ENCODE measurements at regions of chr5 and their contacts with region 1.

Region 1: DNA sequence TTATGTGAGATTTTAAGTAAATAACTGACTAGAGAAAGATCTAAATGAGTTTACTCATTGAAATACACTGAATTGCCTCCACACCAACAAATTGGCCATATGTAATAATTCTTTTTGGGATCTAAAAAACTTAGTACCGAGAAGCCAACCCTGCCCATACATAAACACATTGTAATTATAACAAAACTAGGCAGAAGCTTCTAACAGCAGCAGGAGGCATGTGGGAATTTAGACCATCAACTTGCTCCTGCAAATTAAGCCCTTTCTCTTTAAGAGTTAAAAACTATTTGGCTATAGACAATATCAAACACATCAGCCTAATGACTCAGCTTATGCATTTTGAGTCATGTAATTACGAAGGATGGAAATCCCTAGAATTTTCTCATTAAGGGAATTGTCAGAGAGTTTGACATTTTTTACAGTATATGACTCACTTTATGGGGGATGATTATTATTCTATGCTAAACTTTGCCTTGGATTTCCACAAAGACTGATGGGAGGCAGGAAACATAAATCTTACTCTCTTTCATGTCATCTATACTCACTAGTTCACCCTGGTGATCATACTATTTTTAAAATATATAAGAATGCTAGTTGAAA is 1.0 kb downstream of the IL7R start:
- DNase-seq: no peak
- ATAC-seq: no peak
- H3K4me3 ChIP-seq: peak overlapping the region; percentile 83 to 94
- H3K4me3 Mint-ChIP-seq: peak overlapping the region; percentile 92 to 97 (median 92)
- H3K27ac ChIP-seq: peak overlapping the region; percentile 99
- H3K27ac Mint-ChIP-seq: peak overlapping the region; percentile 99 to 100
- H3K4me1 ChIP-seq: peaks cover 36 to 49% of the 10 kb centered on the region in 2 experiments
- H3K4me1 Mint-ChIP-seq: peaks cover 52 to 76% (median 68%) of the 10 kb centered on the region in 3 donors
- H3K27me3 ChIP-seq: no peaks in the 10 kb centered on the region
- H3K27me3 Mint-ChIP-seq: no peaks in the 10 kb centered on the region

Region 2: GRCh38 chr5:35640623-35641022 is 217.1 kb before region 1 on chr5:
- CTCF ChIA-PET with region 1: no interaction called
- POLR2A ChIA-PET with region 1: no interaction called
- DNase-seq: no peak
- ATAC-seq: no peak
- H3K4me3 ChIP-seq: no peak overlapping the region
- H3K4me3 Mint-ChIP-seq: no peak overlapping the region
- H3K27ac ChIP-seq: no peak overlapping the region
- H3K27ac Mint-ChIP-seq: no peak overlapping the region
- H3K4me1 ChIP-seq: no peaks in the 10 kb centered on the region
- H3K4me1 Mint-ChIP-seq: no peaks in the 10 kb centered on the region
- H3K27me3 ChIP-seq: no peaks in the 10 kb centered on the region
- H3K27me3 Mint-ChIP-seq: no peaks in the 10 kb centered on the region

Region 3: DNA sequence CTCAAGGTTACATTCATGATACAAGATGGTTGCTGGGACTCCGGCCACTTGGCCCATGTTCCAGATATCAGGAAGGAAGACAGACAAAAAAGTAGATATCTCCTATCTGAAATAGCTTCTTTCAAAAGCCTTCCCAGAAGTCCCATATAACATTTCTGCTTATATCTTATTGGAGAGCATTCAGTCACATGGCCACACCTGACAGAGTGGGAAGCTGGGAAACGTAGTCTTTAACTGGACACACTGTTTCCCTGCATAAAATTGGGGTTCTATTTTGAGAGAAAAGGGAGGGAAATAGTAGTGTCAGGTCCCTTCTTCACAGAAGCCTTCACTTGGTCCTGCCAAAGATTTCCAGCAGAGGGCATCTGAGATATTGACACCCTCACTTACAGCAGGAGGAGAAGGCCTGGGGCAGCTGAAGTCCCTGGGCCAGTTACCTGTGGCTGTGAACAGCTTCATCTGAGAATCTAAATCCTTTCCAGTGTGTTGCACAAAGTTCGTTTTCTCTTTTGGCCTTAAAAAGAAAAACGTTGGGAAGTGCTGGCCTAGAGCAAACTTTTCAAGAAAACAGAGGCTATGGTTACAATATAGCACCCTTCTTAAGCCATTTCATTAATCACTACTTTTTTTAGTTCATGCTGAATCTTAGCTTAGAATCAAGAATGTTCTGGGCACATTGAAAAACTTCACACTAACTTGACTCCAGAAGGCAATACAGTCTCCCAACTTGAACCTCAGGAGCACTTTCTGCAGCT is 206.5 kb before region 1 on chr5:
- CTCF ChIA-PET with region 1: interaction called, 3 to 8 read pairs
- POLR2A ChIA-PET with region 1: interaction called in 1 of 2 experiments, 12 read pairs
- DNase-seq: peak; percentile 15 to 79 (median 58)
- ATAC-seq: peak; percentile 86 to 96 (median 94)
- H3K4me3 ChIP-seq: no peak overlapping the region
- H3K4me3 Mint-ChIP-seq: no peak overlapping the region
- H3K27ac ChIP-seq: no peak overlapping the region
- H3K27ac Mint-ChIP-seq: peak overlapping the region; percentile 45 to 66
- H3K4me1 ChIP-seq: peaks cover 0 to 4% of the 10 kb centered on the region in 2 experiments
- H3K4me1 Mint-ChIP-seq: peaks cover 6 to 9% (median 8%) of the 10 kb centered on the region in 3 donors
- H3K27me3 ChIP-seq: no peaks in the 10 kb centered on the region
- H3K27me3 Mint-ChIP-seq: no peaks in the 10 kb centered on the region

Region 4: DNA sequence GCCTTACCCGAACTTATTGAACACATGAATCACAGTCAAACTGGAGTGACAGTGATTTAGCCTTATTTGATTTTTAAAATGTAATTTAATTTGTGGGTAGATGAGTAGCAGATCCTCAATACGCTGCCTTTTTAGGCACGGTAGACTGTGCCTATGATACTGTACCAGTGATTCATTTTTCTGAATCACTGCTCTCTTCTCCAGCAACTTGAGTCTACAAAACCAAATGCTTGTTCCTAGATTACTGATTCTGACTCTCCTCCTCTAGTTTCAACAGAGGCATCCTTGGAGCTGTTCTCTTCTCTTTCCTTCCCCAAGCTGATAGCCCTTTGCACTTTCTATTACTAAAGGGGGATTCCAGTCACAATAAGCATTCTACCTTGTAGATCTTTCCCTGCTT is 95.3 kb before region 1 on chr5:
- CTCF ChIA-PET with region 1: no interaction called
- POLR2A ChIA-PET with region 1: no interaction called
- DNase-seq: no peak
- ATAC-seq: no peak
- H3K4me3 ChIP-seq: no peak overlapping the region
- H3K4me3 Mint-ChIP-seq: no peak overlapping the region
- H3K27ac ChIP-seq: no peak overlapping the region
- H3K27ac Mint-ChIP-seq: no peak overlapping the region
- H3K4me1 ChIP-seq: peaks cover 0 to 3% of the 10 kb centered on the region in 2 experiments
- H3K4me1 Mint-ChIP-seq: peaks cover 29 to 40% (median 37%) of the 10 kb centered on the region in 3 donors
- H3K27me3 ChIP-seq: no peaks in the 10 kb centered on the region
- H3K27me3 Mint-ChIP-seq: no peaks in the 10 kb centered on the region

Region 5: GRCh38 chr5:35777358-35778087 is 80.2 kb before region 1 on chr5:
- CTCF ChIA-PET with region 1: interaction called, 19 to 58 read pairs
- POLR2A ChIA-PET with region 1: interaction called, 9 to 75 read pairs
- DNase-seq: peak; percentile 39 to 91 (median 68)
- ATAC-seq: peak; percentile 41 to 67 (median 50)
- H3K4me3 ChIP-seq: peak overlapping the region in 1 of 2 donors; percentile 3
- H3K4me3 Mint-ChIP-seq: peak overlapping the region; percentile 33 to 65 (median 40)
- H3K27ac ChIP-seq: peak overlapping the region; percentile 58
- H3K27ac Mint-ChIP-seq: peak overlapping the region; percentile 89 to 95
- H3K4me1 ChIP-seq: peaks cover 16 to 37% of the 10 kb centered on the region in 2 experiments
- H3K4me1 Mint-ChIP-seq: peaks cover 73 to 77% (median 75%) of the 10 kb centered on the region in 3 donors
- H3K27me3 ChIP-seq: no peaks in the 10 kb centered on the region
- H3K27me3 Mint-ChIP-seq: no peaks in the 10 kb centered on the region

Region 6: DNA sequence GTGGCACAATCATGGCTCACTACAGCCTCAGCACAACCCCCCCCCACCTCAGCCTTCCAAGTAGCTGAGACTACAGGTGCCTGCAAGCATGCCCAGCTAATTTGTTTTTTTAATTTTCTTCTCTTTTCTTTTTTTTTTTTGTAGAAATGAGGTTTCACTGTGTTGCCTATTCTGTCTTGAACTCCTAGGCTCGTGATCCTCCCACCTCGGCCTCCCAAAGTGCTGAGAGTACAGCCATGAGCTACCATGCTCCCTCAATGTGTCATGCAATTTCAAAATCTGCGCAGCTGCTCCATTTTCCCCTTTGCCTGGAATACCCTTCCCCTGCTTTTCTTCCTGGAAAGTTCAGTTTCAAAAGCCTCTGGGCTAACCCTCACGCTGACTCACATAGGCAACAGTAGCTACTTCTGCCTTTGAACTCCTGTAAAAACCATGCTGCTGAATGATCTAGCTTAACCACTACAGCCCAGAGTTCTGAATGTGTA is 72.1 kb before region 1 on chr5:
- CTCF ChIA-PET with region 1: interaction called, 5 to 11 read pairs
- POLR2A ChIA-PET with region 1: interaction called, 9 to 75 read pairs
- DNase-seq: peak in 2 of 35 experiments; percentile 25 to 44
- ATAC-seq: peak; percentile 48 to 90 (median 80)
- H3K4me3 ChIP-seq: no peak overlapping the region
- H3K4me3 Mint-ChIP-seq: peak overlapping the region; percentile 54 to 60 (median 55)
- H3K27ac ChIP-seq: no peak overlapping the region
- H3K27ac Mint-ChIP-seq: peak overlapping the region; percentile 83 to 91
- H3K4me1 ChIP-seq: peaks cover 29 to 60% of the 10 kb centered on the region in 2 experiments
- H3K4me1 Mint-ChIP-seq: peaks cover 85 to 89% (median 88%) of the 10 kb centered on the region in 3 donors
- H3K27me3 ChIP-seq: no peaks in the 10 kb centered on the region
- H3K27me3 Mint-ChIP-seq: no peaks in the 10 kb centered on the region

Region 7: GRCh38 chr5:35794684-35795375 is 62.9 kb before region 1 on chr5:
- CTCF ChIA-PET with region 1: interaction called, 3 to 6 read pairs
- POLR2A ChIA-PET with region 1: interaction called, 4 to 27 read pairs
- DNase-seq: no peak
- ATAC-seq: no peak
- H3K4me3 ChIP-seq: no peak overlapping the region
- H3K4me3 Mint-ChIP-seq: peak overlapping the region; percentile 17 to 42 (median 42)
- H3K27ac ChIP-seq: peak overlapping the region; percentile 21
- H3K27ac Mint-ChIP-seq: peak overlapping the region; percentile 83 to 87
- H3K4me1 ChIP-seq: peaks cover 37 to 50% of the 10 kb centered on the region in 2 experiments
- H3K4me1 Mint-ChIP-seq: peaks cover 80 to 88% (median 87%) of the 10 kb centered on the region in 3 donors
- H3K27me3 ChIP-seq: no peaks in the 10 kb centered on the region
- H3K27me3 Mint-ChIP-seq: no peaks in the 10 kb centered on the region

Region 8: GRCh38 chr5:35811108-35811741 is 46.5 kb before region 1 on chr5:
- CTCF ChIA-PET with region 1: interaction called in 1 of 2 experiments, 11 read pairs
- POLR2A ChIA-PET with region 1: interaction called, 6 to 178 read pairs
- DNase-seq: peak in 19 of 35 experiments; percentile 11 to 89 (median 32)
- ATAC-seq: peak; percentile 79 to 83 (median 82)
- H3K4me3 ChIP-seq: no peak overlapping the region
- H3K4me3 Mint-ChIP-seq: peak overlapping the region; percentile 52 to 62 (median 58)
- H3K27ac ChIP-seq: peak overlapping the region; percentile 97
- H3K27ac Mint-ChIP-seq: peak overlapping the region; percentile 94 to 96
- H3K4me1 ChIP-seq: peaks cover 49 to 58% of the 10 kb centered on the region in 2 experiments
- H3K4me1 Mint-ChIP-seq: peaks cover 65 to 73% (median 67%) of the 10 kb centered on the region in 3 donors
- H3K27me3 ChIP-seq: no peaks in the 10 kb centered on the region
- H3K27me3 Mint-ChIP-seq: no peaks in the 10 kb centered on the region

Region 9: DNA sequence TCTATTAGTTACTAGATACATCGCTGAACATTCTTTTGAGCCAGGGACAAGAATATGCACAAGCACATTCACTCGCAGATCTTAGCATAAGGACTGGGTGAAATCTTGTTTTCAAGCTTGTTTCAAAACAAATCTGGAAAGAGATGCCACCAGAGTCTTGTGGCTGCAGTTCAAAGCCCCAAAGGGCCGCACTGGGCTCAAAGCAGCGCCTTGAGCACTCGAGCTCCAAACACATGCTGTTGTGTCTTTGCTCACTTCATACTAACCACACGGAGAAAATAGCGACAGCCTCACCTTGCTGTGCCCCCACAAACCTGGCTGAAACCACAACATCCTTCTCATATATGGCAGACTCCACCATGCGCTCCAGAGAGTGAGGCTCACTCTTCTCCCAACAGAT is 35.2 kb before region 1 on chr5:
- CTCF ChIA-PET with region 1: interaction called, 5 to 10 read pairs
- POLR2A ChIA-PET with region 1: interaction called, 15 to 85 read pairs
- DNase-seq: peak; percentile 34 to 87 (median 63)
- ATAC-seq: peak; percentile 81 to 86 (median 85)
- H3K4me3 ChIP-seq: peak overlapping the region; percentile 4 to 40
- H3K4me3 Mint-ChIP-seq: peak overlapping the region; percentile 55 to 69 (median 65)
- H3K27ac ChIP-seq: peak overlapping the region; percentile 79
- H3K27ac Mint-ChIP-seq: peak overlapping the region; percentile 97 to 99
- H3K4me1 ChIP-seq: peaks cover 78 to 87% of the 10 kb centered on the region in 2 experiments
- H3K4me1 Mint-ChIP-seq: peaks cover 88 to 91% (median 89%) of the 10 kb centered on the region in 3 donors
- H3K27me3 ChIP-seq: no peaks in the 10 kb centered on the region
- H3K27me3 Mint-ChIP-seq: no peaks in the 10 kb centered on the region

Region 10: DNA sequence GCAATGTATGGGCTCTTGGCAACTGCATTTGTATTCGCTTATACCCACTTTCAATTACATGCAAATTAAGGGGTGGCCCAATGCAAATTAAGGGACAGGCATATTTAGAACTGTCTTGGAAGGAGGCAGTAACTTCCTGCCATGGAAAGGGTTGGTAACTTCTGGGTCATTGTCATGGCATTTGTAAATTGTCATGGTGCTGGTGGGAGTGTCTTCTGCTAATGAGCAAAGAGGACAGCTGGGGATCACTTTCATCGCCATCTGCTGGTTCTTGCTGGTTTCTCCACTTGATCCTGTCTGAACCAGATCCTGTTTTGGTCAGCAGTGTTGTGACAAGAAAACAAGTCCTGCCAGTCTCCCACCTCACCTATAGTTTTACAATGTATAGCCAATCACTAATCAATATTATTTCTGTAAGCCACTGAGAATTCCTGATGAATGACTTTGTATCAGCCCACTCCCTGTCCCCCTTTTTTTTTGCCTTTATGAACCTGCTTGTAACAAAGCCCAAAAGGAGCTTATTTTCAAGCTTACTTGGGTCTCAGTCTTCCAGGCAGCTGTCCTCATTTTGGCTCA is 232.4 kb after region 1 on chr5:
- CTCF ChIA-PET with region 1: no interaction called
- POLR2A ChIA-PET with region 1: no interaction called
- DNase-seq: peak in 1 of 35 experiments; percentile 17
- ATAC-seq: no peak
- H3K4me3 ChIP-seq: no peak overlapping the region
- H3K4me3 Mint-ChIP-seq: no peak overlapping the region
- H3K27ac ChIP-seq: no peak overlapping the region
- H3K27ac Mint-ChIP-seq: no peak overlapping the region
- H3K4me1 ChIP-seq: no peaks in the 10 kb centered on the region
- H3K4me1 Mint-ChIP-seq: no peaks in the 10 kb centered on the region
- H3K27me3 ChIP-seq: peaks cover 0 to 2% of the 10 kb centered on the region in 2 experiments
- H3K27me3 Mint-ChIP-seq: peaks cover 5 to 11% of the 10 kb centered on the region in 2 donors